BJ (cell line): ENCODE measurements at regions of chr1 and their contacts with region 1.

Region 1: DNA sequence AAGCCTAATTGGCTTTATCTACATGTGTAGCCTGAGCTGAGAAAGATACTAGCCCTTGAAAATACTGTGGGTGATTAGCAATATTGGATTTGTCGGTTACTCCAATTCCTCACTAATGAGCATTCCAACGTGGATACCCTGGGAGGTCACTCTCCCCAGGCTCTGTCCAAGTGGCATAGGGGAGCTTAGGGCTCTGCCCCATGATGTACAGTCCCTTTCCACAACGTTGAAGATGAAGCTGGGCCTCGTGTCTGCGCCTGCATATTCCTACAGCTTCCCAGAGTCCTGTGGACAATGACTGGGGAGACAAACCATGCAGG is 2.6 kb downstream of the RCC1 start:
- DNase-seq: no peak
- H3K4me3 ChIP-seq: peak overlapping the region; percentile 71
- H3K27me3 ChIP-seq: no peaks in the 10 kb centered on the region
- CTCF ChIP-seq: no peak

Region 2: DNA sequence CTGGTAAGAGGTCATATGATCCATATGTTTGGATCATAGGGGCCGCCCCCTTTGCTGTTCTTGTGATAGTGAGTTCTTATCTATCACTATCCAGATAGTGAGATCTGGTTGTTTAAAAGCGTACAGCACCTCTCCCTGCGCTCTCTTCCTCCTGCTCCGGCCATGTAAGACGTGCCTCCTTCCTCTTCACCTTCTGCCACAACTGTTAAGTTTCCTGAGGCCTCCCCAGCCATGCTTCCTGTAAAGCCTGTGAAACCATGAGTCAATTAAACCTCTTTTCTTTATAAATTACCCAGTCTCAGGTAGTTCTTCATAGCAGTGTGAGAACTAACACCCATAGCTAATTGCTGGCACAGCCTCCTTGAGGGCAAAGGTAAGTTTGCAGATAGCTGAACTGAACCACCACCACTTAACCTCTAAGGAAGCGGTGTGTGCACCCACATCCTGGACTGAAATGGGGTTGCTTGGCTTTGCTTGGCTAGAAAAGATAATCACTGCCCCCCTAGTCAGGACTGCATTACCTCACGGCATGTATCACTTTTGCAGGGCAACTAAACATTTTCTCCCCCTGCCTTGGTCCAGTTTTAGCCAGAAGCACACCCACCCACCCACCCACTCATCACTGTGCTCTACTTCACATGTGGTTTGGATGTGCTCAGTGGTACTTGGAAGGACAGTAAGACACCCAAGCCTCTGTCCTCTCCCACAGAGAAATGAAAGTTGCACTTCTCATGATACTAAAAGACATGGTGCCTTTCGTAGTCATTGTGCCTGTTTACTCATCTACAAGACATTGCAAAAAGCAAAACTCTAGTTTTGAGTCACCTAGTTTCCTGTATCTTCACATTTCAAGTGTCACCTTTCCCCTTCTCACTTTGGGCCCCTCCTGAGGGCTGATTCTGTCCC is 308.8 kb before region 1 on chr1:
- CTCF ChIA-PET with region 1: no interaction called
- POLR2A ChIA-PET with region 1: no interaction called
- DNase-seq: no peak
- H3K4me3 ChIP-seq: no peak overlapping the region
- H3K27me3 ChIP-seq: no peaks in the 10 kb centered on the region
- CTCF ChIP-seq: no peak

Region 3: GRCh38 chr1:28329395-28330153 is 178.8 kb before region 1 on chr1:
- CTCF ChIA-PET with region 1: no interaction called
- POLR2A ChIA-PET with region 1: interaction called, 12 read pairs
- DNase-seq: no peak
- H3K4me3 ChIP-seq: peak overlapping the region; percentile 71
- H3K27me3 ChIP-seq: no peaks in the 10 kb centered on the region
- CTCF ChIP-seq: 0 out of 2 replicates have a peak, but pooled peaks have one; percentile 3

Region 4: GRCh38 chr1:28526889-28527288 is 18.5 kb after region 1 on chr1:
- CTCF ChIA-PET with region 1: no interaction called
- POLR2A ChIA-PET with region 1: no interaction called
- DNase-seq: no peak
- H3K4me3 ChIP-seq: no peak overlapping the region
- H3K27me3 ChIP-seq: no peaks in the 10 kb centered on the region
- CTCF ChIP-seq: no peak

Region 5: GRCh38 chr1:28560886-28561285 is 52.5 kb after region 1 on chr1:
- CTCF ChIA-PET with region 1: no interaction called
- POLR2A ChIA-PET with region 1: no interaction called
- DNase-seq: no peak
- H3K4me3 ChIP-seq: no peak overlapping the region
- H3K27me3 ChIP-seq: no peaks in the 10 kb centered on the region
- CTCF ChIP-seq: no peak

Region 6: DNA sequence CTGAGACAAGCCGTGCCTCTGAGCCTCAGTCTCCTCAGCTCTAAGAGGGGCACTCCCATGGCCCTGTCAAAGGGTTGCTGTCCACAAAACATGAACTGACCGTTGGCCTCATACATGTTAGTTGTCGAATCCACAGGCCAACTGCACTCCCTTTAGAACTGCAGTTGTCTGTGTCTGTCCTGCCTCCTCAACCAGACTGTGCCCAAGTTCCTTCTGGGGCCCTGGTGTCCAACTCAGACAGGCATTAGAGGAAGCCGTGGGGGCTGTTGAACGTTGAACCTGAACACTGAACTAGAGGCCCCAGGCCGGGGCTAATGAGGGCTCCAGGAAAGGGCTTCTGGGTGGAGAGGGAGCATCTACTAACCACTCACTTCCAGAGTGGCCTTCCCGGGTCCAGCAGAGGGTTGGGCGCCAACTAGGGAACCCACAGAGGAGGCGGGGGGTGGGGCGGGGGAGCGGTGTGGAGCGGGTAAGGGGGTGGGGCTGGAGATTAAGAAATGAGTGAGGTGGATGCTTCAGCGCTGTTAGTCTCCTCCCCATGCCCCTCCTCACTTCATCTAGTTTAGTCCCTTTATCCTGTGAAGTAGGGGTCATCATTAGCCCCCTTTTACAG is 83.4 kb after region 1 on chr1 and contains the start of gene RAB42:
- CTCF ChIA-PET with region 1: no interaction called
- POLR2A ChIA-PET with region 1: no interaction called
- DNase-seq: no peak
- H3K4me3 ChIP-seq: peak within 1 kb of the TSS; percentile 53
- H3K27me3 ChIP-seq: no peaks in the 10 kb centered on the region
- CTCF ChIP-seq: no peak
- polyA plus RNA-seq, gene RAB42: 2.0 and 2.8 TPM in 2 replicates